ENCODE measurements at regions of chr20 and their contacts with region 1.

Region 1: GRCh38 chr20:13638496-13639222 is at the start of gene TASP1:
- DNase-seq: peak; percentile 97
- ATAC-seq: peak; percentile 100
- total RNA-seq, gene TASP1: 4.7 TPM

Region 2: GRCh38 chr20:13336308-13337089 is 302.2 kb before region 1 on chr20:
- intact Hi-C with region 1: no loop called
- DNase-seq: no peak
- ATAC-seq: no peak

Region 3: GRCh38 chr20:13784893-13785715 is 146.4 kb after region 1 on chr20 and contains the starts of genes ESF1 and NDUFAF5:
- intact Hi-C with region 1: loop called (anchors 10 kb)
- DNase-seq: peak; percentile 96
- ATAC-seq: peak; percentile 99
- total RNA-seq, gene ESF1: 13.3 TPM
- total RNA-seq, gene NDUFAF5: 76.0 TPM

Region 4: DNA sequence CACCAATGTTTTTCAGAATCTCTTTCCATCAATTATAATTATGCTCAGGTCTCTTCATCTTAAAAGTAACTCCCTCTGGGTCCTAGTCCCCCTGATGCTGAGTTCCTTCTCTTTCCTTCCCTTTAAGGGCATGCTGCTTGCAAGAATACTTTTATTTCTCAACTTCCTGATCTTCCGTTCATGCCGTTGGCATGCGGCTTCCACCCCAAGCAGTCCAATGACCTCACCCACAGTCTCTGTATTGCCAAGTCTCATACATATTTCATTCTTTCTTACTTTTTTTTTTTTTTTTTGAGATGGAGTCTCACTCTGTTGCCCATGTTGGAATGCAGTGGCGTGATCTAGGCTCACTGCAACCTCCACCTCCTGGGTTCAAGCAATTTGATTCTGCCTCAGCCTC is 229.7 kb after region 1 on chr20:
- intact Hi-C with region 1: no loop called
- DNase-seq: no peak
- ATAC-seq: peak; percentile 39